Activated CD4-positive, alpha-beta T cell treated with anti-CD3 and anti-CD28 coated beads, Interleukin-2, amount 10 ng/mL, durations not matched to agents 7 days and 5 days (primary cell): ENCODE measurements at regions of chr1 and their contacts with region 1.

Region 1: DNA sequence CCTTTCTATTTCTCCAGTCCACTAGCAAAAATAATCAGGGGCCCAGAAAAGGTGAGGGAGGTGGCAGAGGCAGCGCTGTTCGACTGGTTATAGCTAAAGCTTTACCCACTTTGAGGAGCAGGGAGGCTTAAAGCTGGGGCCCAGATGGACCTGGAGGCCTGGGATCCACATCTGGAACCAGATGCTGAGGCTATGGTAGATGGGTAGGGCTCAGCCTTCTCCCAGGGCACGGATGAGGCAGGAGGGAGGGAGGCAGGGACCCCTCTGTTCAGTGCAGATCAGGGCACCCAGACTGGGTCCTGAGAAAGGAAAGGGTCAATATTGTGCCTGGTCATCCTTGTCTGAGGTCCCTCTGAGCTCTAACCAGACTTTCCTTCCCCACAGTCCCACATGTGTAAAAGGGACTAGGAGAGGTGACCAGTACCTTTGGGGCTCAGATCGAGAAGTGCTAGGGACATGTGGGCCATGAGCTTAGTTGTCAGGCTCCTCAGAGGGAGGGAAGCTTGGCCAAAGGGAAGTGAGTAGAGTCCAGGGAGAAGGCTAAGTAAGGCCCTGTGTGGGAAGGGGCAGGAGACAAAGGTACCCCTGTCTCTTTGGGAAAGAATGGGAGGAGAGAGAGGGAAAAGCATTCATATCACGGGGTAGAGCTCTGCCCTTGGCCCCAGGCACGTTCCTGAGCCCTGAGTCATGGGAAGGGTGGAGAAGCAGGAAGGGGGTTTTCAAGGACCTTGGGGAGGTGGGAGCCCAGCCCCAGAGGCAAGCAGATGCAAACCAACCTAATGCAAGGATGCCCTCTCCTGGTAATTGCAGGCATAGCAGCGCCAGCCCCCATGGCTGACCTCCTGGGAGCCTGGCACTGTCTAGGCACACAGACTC is 15.4 kb downstream of the LMNA start:
- DNase-seq: peak; percentile 82
- H3K4me3 Mint-ChIP-seq: no peak overlapping the region
- H3K27ac Mint-ChIP-seq: peak overlapping the region; percentile 46
- H3K4me1 Mint-ChIP-seq: peaks cover 52% of the 10 kb centered on the region
- H3K27me3 Mint-ChIP-seq: no peaks in the 10 kb centered on the region

Region 2: DNA sequence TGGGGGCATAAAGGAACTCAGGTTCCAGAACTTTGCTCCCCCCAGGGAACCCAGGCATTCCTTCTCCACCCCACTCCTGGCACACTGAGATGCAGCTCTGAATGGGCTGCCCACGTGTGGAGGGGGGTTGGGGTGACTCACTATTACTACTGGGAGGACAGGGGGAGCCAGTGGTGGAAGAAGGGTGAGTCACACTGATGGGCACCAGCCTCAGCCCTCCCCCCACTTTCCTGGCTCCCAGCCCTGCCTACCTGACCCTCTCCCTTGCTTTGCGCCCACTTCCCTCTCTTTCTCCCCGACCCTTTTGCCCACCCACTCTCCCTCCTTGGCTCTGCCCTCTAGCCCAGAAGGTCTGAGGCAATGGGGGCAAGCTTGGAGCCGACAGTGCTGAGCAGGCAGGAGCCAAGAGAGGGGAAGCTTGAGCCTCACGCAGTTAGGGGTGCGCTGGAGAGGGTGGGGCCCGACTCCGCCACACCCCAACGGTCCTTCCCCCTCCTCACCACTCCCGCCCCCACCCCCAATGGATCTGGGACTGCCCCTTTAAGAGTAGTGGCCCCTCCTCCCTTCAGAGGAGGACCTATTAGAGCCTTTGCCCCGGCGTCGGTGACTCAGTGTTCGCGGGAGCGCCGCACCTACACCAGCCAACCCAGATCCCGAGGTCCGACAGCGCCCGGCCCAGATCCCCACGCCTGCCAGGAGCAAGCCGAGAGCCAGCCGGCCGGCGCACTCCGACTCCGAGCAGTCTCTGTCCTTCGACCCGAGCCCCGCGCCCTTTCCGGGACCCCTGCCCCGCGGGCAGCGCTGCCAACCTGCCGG is 15.6 kb before region 1 on chr1 and contains the start of gene LMNA:
- CTCF ChIA-PET with region 1: interaction called, 645 read pairs
- POLR2A ChIA-PET with region 1: no interaction called
- DNase-seq: peak; percentile 63
- H3K4me3 Mint-ChIP-seq: peak within 1 kb of the TSS; percentile 78
- H3K27ac Mint-ChIP-seq: peak within 1 kb of the TSS; percentile 68
- H3K4me1 Mint-ChIP-seq: peaks cover 32% of the 10 kb centered on the region
- H3K27me3 Mint-ChIP-seq: peaks cover 43% of the 10 kb centered on the region
- total RNA-seq, gene LMNA: 38.3 to 43.5 TPM

Region 3: DNA sequence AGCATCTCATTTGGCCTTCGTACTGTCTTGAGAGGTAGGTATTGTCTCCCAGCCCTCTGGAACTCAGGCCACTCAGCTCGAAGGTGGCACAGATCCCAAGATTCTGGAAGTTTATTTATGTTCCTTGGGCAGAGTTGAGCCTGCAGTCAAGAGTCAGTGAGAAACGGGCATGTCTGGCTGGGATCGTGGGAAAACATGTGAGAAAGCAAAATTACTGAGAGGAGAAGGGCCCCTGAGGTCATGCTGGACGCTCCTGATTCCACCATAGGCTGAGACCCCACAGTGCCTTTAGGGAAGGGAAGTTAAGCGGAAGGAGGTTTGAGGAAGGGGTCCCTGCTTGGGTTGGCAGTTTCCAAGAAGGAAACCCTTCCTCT is 10.9 kb after region 1 on chr1:
- CTCF ChIA-PET with region 1: interaction called, 48 read pairs
- POLR2A ChIA-PET with region 1: no interaction called
- DNase-seq: no peak
- H3K4me3 Mint-ChIP-seq: no peak overlapping the region
- H3K27ac Mint-ChIP-seq: no peak overlapping the region
- H3K4me1 Mint-ChIP-seq: peaks cover 8% of the 10 kb centered on the region
- H3K27me3 Mint-ChIP-seq: no peaks in the 10 kb centered on the region